ENCODE measurements at regions of chr22 and their contacts with region 1.

Region 1: GRCh38 chr22:44625981-44626687 is 75.9 kb upstream of the PRR5 start:
- DNase-seq: peak; percentile 84
- ATAC-seq: peak; percentile 81
- H3K4me3 Mint-ChIP-seq: no peak overlapping the region
- H3K27ac Mint-ChIP-seq: no peak overlapping the region
- H3K4me1 Mint-ChIP-seq: peaks cover 7% of the 10 kb centered on the region
- H3K27me3 Mint-ChIP-seq: peaks cover 3% of the 10 kb centered on the region

Region 2: DNA sequence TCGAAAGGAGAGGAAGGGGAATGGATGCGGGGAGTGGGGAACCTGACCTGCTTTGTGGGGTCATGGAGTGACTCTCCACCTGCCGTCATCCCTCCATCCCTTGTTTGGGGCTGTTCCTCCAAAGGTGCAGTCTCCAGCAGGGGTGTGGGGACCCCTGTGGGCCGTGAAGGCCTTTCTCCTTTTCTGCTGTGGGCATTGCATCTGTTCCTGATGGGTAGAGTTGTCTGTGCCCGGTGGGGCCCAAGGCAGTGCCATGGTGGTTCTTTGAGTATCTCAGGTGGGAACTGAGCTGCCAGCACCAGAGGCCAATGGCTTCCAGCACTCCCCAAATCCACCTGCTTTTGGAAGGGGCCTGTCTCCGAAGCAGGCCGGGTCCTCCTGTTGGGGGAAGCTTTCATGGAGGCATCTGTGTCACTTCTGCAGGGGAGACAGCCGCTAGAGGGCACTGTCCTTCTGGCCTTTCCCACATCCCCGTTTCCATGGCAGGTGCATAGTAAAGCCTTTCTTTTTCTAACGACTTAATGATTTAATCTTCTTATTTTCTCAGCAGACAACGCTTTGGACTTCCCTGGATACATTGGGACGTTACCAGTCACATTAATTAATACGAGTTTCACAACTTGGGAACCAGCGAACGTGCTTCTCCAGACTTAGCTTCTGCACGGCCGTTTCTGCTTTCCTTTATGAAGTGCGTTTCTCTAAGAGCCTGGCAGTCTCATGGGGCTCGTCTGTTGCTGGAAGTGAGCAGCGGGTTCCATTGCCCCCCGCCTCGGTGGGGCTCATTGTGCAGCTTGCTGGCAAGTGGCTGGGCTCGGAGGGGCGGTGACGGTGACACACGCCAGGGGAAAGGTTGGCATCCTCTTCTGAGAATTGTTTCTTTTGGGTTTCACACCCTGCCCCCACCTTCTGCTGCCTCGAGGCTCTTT is 544.9 kb before region 1 on chr22:
- CTCF ChIA-PET with region 1: interaction called, 18 read pairs
- DNase-seq: peak; percentile 80
- ATAC-seq: peak; percentile 67
- H3K4me3 Mint-ChIP-seq: no peak overlapping the region
- H3K27ac Mint-ChIP-seq: no peak overlapping the region
- H3K4me1 Mint-ChIP-seq: no peaks in the 10 kb centered on the region
- H3K27me3 Mint-ChIP-seq: no peaks in the 10 kb centered on the region

Region 3: GRCh38 chr22:44664149-44664548 is 38.0 kb after region 1 on chr22:
- CTCF ChIA-PET with region 1: interaction called, 23 read pairs
- DNase-seq: peak; percentile 93
- ATAC-seq: peak; percentile 54
- H3K4me3 Mint-ChIP-seq: no peak overlapping the region
- H3K27ac Mint-ChIP-seq: peak overlapping the region; percentile 79
- H3K4me1 Mint-ChIP-seq: peaks cover 50% of the 10 kb centered on the region
- H3K27me3 Mint-ChIP-seq: peaks cover 19% of the 10 kb centered on the region

Region 4: GRCh38 chr22:44669561-44669976 is 43.4 kb after region 1 on chr22:
- CTCF ChIA-PET with region 1: interaction called, 23 read pairs
- DNase-seq: peak; percentile 51
- ATAC-seq: no peak
- H3K4me3 Mint-ChIP-seq: peak overlapping the region; percentile 66
- H3K27ac Mint-ChIP-seq: peak overlapping the region; percentile 46
- H3K4me1 Mint-ChIP-seq: peaks cover 67% of the 10 kb centered on the region
- H3K27me3 Mint-ChIP-seq: peaks cover 4% of the 10 kb centered on the region

Measured in activated CD8-positive, alpha-beta memory T cell treated with anti-CD3 and anti-CD28 coated beads, Interleukin-2, amount 10 ng/mL, durations not matched to agents 7 days and 5 days (primary cell).